Heart left ventricle (tissue), 16 donors: ENCODE measurements at regions of chr7 and their contacts with region 1.

Region 1: DNA sequence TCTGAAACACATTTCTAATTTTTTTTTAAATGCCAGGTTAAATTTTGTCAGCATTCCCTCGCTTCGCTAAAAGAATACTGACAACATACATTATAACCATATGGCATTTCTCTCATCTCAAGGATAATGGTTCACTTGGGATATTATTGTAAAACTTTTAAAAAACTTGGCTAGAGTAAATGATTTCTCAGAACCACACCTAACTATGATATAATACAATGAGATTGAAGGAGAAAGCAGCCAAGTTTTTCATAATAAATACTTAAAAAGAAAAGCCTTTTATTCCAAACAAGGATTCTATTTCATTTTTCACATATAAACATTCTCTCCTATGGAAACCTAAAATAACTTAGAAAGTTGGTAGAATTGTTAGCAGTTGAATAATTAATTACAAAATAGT is 413.9 kb downstream of the HGF start:
- DNase-seq: no peak
- ATAC-seq: no peak
- H3K4me3 ChIP-seq: no peak overlapping the region
- H3K27ac ChIP-seq: no peak overlapping the region
- H3K4me1 ChIP-seq: no peaks in the 10 kb centered on the region
- H3K27me3 ChIP-seq: no peaks in the 10 kb centered on the region
- CTCF ChIP-seq: no peak
- POLR2A ChIP-seq: no peak

Region 2: DNA sequence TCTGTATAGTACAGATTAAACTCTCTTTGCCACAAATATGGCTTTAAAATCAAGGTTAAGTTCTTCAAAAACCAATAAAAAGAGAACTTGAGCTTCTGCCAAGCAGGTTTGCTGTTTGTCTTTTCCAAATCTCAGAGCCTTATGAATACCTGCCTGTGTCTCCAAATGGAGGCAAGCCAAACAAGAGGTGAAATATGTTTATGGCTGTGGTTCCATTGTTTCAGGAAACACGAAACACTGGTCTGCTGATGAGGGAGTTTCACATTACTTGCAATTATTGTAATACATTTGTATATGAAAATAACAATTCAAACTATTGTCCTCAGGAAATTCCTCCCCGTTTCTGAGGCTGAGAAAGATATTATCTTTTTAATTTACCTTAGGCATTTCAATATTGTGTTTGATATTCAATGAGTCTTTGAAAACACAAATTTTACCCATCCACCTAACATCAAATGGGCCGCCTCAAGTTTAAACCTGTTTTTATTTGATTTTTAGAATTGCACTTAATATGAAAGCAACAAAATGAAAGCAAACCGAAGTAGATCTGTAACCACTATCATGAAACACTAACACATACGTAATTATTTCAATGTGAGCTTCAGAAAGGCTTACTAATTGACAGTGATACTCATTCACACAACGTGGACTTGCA is 54.7 kb after region 1 on chr7:
- intact Hi-C with region 1: loop called in 1 of 10 experiments (anchors 10 kb)
- DNase-seq: no peak
- ATAC-seq: no peak
- H3K4me3 ChIP-seq: no peak overlapping the region
- H3K27ac ChIP-seq: no peak overlapping the region
- H3K4me1 ChIP-seq: no peaks in the 10 kb centered on the region
- H3K27me3 ChIP-seq: no peaks in the 10 kb centered on the region
- CTCF ChIP-seq: no peak
- POLR2A ChIP-seq: no peak